ENCODE measurements at regions of chrX and their contacts with region 1.

Region 1: GRCh38 chrX:41116948-41117347 is 31.7 kb downstream of the USP9X start:
- DNase-seq: no peak
- H3K4me3 ChIP-seq: no peak overlapping the region
- CTCF ChIP-seq: no peak
- POLR2A ChIP-seq: no peak

Region 2: DNA sequence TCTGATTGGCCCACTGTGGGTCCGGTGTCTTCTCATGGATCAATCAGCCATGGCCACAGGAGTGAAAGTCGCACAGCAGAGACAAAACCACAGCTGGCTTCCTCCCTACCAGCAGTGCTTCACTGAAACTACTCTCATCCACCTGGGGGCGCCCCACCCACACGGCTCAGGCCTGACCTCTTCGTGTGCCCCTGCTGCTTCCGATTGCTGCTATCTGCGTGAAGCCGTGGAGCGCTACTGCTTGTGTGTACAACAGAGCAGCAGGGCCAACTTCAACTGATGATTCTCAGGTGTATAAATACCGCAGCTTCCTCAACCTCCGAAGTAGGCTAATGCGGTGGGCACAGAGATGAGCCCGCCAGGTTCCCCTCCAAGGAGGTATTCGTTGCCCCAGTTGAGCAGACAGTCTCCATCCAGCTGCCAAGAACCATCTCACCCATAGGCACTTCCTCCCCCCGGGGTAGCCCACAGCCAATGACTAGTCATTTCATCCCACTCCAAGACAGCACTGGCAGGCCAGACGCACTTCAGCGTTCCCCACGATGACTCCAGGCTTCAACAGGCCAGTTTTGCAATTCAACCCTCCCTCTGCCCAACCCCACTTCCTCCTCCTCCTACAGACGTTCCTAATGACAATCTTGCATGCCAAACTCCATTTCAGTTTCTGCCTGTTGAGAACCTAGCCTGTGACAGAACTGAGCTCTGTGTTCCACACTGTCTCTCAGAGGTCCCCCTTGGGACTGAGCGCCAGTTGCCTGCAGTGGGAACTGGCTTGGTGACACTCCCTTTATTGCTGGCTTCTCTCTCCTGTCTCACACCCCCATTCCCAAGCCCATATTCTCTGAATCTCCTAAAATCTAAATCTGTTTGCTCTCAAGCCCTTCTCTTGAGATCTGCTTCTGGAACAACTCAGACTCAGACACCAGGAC is 577.5 kb before region 1 on chrX:
- intact Hi-C with region 1: loop called (anchors 10 kb)
- DNase-seq: peak in 1 of 2 donors; percentile 30
- H3K4me3 ChIP-seq: no peak overlapping the region
- CTCF ChIP-seq: no peak
- POLR2A ChIP-seq: no peak

Region 3: DNA sequence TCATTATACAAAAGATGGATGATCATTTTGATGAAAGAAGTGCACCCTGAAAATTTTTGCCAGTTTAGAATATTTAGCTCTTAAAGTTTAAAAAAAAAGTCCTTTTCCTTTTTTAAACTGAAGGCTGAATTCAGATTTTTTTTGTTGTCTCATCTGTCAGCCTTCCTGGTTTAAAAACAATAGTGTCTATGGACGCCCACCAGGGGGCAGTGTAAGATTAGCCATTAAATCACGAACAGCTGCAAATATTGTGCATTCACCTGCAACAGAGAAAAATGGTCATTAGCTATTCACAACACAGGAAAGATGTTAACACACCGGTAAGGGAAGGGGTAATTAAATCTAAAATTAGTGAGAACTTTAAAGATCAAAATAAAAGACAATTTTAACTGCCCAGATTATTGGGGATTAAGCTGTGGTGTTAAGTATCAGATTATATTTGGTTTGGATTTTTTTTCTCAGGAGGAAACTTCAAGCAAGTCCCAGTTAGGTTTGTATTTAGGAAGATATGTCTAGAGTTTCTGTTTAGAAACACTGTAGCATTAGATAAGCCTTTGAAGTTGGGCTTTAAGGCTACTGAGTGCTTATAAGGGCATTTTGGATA is 465.2 kb before region 1 on chrX:
- intact Hi-C with region 1: loop called (anchors 10 kb)
- DNase-seq: peak; percentile 38 to 91
- H3K4me3 ChIP-seq: no peak overlapping the region
- CTCF ChIP-seq: no peak
- POLR2A ChIP-seq: no peak

Measured in lower leg skin (tissue), 4 donors.